Common myeloid progenitor, CD34-positive (primary cell): ENCODE measurements at regions of chr12 and their contacts with region 1.

Region 1: DNA sequence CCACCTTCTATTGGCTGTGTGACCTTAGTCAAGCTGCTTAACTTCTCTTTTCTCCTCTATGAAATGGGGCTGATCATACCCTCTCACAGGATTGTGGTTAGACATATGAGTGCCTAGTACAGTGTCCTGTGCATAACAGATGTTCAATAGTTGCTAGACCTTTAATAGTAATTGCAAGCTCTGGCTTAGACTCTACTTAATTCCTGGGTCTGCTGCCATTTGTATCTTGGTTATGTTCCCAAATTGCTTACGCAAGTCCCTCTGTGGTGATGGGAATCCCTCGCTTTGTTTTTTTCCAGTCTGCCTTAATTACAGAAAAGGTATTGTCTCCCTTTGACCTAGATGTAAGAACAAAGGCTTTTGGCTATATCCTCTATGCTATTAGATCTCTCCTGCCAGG is 15.1 kb downstream of the SUDS3 start:
- DNase-seq: no peak
- H3K4me3 ChIP-seq: no peak overlapping the region
- H3K27ac ChIP-seq: no peak overlapping the region
- H3K4me1 ChIP-seq: no peaks in the 10 kb centered on the region
- H3K27me3 ChIP-seq: no peaks in the 10 kb centered on the region

Region 2: GRCh38 chr12:118357257-118358007 is 34.0 kb before region 1 on chr12:
- CTCF ChIA-PET with region 1: no interaction called
- POLR2A ChIA-PET with region 1: no interaction called
- DNase-seq: peak; percentile 92 to 97 (median 95)
- H3K4me3 ChIP-seq: peak overlapping the region in 6 of 7 experiments; percentile 43 to 84 (median 68)
- H3K27ac ChIP-seq: peak overlapping the region; percentile 55 to 88
- H3K4me1 ChIP-seq: peaks cover 34 to 77% (median 48%) of the 10 kb centered on the region in 4 experiments
- H3K27me3 ChIP-seq: no peaks in the 10 kb centered on the region

Region 3: DNA sequence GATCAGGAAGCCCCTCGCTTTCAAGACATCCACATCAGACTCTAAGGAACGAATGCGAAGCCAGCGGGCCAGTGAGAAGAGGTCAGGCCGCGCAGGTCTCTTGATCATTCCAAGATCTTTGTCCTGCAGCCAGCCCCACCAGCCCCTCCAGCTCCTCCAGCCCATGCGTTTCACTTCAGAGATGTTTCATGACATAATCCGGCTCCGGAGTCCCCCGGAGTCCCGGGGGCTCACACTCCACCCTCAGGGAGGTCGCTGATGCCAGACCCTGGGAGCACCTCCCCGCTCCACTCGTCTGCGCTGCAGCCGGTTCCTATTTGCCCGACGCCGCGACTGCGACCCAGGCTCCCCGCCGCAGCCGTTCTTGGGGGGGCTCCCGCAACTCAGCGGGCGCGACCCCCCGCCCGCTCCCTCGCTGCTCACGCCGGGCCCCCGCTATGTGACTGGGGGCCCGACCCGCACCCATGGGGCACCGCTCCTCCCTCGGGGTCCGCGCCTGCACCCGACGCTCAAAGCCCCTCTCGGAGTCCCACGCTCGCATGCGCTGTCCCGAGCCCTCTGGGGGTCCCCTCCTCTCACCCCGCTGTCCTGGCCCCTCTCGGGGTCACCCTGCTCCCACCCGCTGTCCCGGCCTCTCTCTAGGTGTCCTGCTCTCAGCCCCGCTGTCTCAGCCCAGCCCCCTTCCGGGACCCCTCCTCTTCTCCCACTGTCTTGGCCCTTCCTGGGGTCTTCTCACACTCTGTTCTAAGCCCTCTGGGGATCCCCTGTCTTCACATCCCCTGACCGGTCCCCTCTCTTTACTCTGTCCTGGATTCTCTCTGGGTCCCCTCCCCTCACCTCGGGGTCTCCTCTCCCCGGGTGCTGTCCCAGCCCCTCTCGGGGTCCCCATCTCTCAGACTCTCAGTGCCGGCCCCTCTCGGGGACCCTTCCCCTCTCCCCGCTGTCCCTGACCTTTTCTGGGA is 19.8 kb before region 1 on chr12:
- CTCF ChIA-PET with region 1: no interaction called
- POLR2A ChIA-PET with region 1: no interaction called
- DNase-seq: peak in 1 of 3 donors; percentile 54
- H3K4me3 ChIP-seq: peak overlapping the region; percentile 96 to 99 (median 97)
- H3K27ac ChIP-seq: peak overlapping the region; percentile 86 to 93
- H3K4me1 ChIP-seq: peaks cover 33 to 53% (median 43%) of the 10 kb centered on the region in 4 experiments
- H3K27me3 ChIP-seq: no peaks in the 10 kb centered on the region

Region 4: GRCh38 chr12:118404876-118405521 is 13.6 kb after region 1 on chr12:
- CTCF ChIA-PET with region 1: interaction called, 11 read pairs
- POLR2A ChIA-PET with region 1: interaction called, 3 read pairs
- DNase-seq: peak; percentile 59 to 79 (median 75)
- H3K4me3 ChIP-seq: no peak overlapping the region
- H3K27ac ChIP-seq: no peak overlapping the region
- H3K4me1 ChIP-seq: no peaks in the 10 kb centered on the region
- H3K27me3 ChIP-seq: no peaks in the 10 kb centered on the region

Region 5: GRCh38 chr12:118432812-118433545 is 41.6 kb after region 1 on chr12:
- CTCF ChIA-PET with region 1: no interaction called
- POLR2A ChIA-PET with region 1: no interaction called
- DNase-seq: no peak
- H3K4me3 ChIP-seq: no peak overlapping the region
- H3K27ac ChIP-seq: no peak overlapping the region
- H3K4me1 ChIP-seq: no peaks in the 10 kb centered on the region
- H3K27me3 ChIP-seq: no peaks in the 10 kb centered on the region

Region 6: DNA sequence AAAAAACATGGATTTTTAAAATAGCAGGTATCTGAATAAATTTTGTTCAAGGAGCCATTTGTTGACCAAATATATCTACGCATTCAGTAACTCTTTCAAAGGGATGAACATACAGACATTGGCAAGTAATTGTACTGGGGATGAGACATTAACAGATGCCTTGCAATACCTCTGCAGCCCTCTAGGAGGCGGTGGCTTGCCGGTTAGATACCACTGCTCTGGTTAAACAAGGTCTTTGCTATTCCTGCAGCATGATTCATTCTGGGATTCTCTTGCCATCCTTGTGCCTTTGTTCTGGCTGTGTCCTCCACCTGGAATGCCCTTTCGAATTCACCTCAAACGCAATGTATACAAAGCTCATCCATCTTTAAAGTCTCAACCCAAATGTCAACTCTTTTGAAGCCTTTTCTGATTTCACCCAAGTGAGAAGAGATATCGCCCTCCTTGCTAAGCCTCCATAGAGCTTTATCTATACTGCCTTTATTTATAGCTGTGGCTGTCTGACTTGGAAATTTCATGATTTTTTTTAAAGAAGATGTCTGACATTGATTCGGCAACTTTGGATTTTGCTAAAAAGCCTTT is 458.9 kb after region 1 on chr12:
- CTCF ChIA-PET with region 1: no interaction called
- POLR2A ChIA-PET with region 1: no interaction called
- DNase-seq: peak in 2 of 3 donors; percentile 15 to 17
- H3K4me3 ChIP-seq: no peak overlapping the region
- H3K27ac ChIP-seq: no peak overlapping the region
- H3K4me1 ChIP-seq: no peaks in the 10 kb centered on the region
- H3K27me3 ChIP-seq: no peaks in the 10 kb centered on the region